Calu3 (cell line): ENCODE measurements at regions of chr6 and their contacts with region 1.

Region 1: DNA sequence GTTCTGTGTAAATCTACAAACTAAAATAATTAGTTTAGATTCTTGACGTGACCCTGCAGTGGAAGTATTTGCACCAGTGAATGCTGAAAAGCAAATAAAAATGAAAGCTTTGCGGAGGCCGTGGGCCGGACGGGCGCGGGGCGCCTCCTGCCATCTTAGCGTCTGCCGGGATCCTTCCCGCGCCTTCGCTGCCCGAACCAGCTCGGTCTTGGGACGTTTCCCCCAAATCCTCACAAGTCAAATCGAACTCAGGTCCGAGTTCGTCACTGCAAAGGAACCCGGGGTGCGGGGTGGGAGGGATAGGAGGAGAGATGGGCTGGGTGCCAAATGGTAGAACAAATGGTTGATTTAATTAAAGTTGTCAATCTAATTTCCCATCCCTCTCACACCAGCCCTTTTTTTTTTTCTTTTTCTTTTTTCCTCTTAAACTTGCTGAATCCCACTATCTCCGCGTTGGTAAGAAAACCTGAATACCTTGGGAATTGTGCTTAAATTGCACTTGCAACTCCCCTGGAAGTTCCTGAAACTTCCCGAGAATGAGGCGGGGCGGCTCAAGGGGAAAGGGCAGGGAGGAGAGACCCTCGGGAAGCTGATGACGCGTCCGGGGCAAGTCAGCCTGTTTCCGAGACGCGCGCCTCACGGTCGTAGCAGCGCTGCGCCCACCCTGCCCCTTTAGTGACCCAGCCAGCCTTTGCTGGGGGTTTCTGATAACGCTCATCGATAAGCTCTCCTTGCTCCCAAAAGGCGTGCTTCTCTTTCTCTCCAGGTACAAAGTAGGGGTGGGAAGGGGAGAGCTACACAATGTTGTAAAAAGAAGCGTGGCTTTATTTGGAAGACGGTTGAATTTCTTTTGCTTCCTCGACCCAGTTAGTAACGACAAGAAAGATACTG is 1.8 kb downstream of the GJA1 start:
- DNase-seq: peak; percentile 48
- H3K4me3 Mint-ChIP-seq: peak overlapping the region; percentile 94
- H3K27ac Mint-ChIP-seq: peak overlapping the region; percentile 98
- H3K4me1 Mint-ChIP-seq: peaks cover 22% of the 10 kb centered on the region
- H3K27me3 Mint-ChIP-seq: no peaks in the 10 kb centered on the region
- CTCF ChIP-seq: no peak

Region 2: DNA sequence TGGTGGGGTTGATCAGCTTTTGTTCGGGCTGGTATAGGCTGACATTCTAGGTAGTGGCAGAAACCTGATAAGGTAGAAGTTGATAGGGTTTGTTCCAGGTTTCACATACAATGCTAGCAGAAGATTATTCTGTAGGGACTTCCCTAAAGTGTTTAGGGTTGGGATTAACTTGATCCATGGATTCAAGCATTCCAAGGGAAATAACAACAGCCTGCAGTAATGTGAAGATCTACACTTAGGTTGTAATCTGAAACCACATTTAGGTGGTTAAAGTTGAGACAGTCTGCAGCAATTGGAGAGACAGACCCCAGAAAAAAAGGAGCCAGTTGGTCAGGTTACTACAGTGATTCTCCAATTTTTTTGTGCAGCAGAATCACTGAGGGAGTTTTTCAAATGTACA is 54.4 kb after region 1 on chr6:
- CTCF ChIA-PET with region 1: interaction called, 3 read pairs
- intact Hi-C with region 1: loop called (anchors 5 kb)
- DNase-seq: no peak
- H3K4me3 Mint-ChIP-seq: peak overlapping the region; percentile 57
- H3K27ac Mint-ChIP-seq: peak overlapping the region; percentile 87
- H3K4me1 Mint-ChIP-seq: peaks cover 58% of the 10 kb centered on the region
- H3K27me3 Mint-ChIP-seq: no peaks in the 10 kb centered on the region
- CTCF ChIP-seq: no peak

Region 3: DNA sequence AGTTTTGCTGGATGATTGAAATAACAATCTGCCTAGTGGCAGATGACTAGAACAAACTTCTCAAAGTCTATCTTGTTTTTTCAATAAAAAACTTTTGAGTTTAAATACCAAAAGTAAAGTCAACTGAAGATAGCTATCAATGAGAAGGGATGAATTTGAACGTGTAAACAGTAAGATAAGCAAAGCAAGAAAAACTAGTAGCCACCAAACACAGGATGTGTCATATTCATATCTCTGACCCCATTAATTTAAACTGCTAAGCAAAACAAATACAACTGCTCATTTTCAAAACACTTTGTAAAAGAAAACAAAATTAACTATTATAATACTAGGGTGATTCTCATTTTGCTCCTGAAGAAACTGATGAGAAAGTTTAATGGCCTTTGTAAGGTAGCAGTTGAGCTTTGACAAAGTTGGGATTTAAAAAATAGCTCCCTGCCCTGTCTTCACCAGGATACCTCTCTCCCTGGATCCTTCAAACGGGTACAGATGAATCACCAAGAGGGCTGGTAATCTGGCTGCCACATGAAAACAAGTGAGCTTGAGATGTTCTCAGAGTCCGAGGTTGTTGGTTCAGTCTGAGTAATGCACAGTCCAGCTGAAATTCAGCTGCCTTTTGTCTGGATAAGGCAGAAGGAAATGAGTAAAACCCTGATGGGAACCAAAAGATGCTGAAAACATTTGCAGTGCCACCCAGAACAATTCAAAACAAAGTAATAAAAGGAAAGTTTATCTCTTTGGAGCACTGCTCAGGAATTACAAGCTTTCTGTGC is 84.9 kb after region 1 on chr6:
- CTCF ChIA-PET with region 1: no interaction called
- intact Hi-C with region 1: loop called (anchors 5 kb)
- DNase-seq: no peak
- H3K4me3 Mint-ChIP-seq: no peak overlapping the region
- H3K27ac Mint-ChIP-seq: no peak overlapping the region
- H3K4me1 Mint-ChIP-seq: peaks cover 14% of the 10 kb centered on the region
- H3K27me3 Mint-ChIP-seq: no peaks in the 10 kb centered on the region
- CTCF ChIP-seq: no peak

Region 4: DNA sequence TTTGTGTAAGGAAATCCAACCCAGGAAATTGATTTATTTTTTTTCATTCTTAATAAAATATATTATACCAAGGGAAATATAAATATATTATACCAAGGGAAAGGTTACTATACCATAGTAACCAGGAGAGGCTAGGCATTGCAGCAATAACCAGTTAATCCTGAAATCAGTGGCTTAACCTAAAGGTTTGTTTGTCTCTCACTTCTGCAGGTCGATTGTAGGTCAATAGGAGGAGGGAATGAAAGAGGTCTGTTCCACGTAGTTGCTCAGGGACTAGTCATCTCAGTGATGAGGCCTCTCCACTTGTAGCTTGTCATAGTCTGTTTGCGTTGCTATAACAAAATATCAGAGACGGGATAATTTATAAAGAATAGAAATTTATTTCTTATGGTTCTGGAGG is 166.3 kb after region 1 on chr6:
- CTCF ChIA-PET with region 1: no interaction called
- intact Hi-C with region 1: loop called (anchors 5 kb)
- DNase-seq: no peak
- H3K4me3 Mint-ChIP-seq: no peak overlapping the region
- H3K27ac Mint-ChIP-seq: no peak overlapping the region
- H3K4me1 Mint-ChIP-seq: no peaks in the 10 kb centered on the region
- H3K27me3 Mint-ChIP-seq: no peaks in the 10 kb centered on the region
- CTCF ChIP-seq: no peak

Region 5: DNA sequence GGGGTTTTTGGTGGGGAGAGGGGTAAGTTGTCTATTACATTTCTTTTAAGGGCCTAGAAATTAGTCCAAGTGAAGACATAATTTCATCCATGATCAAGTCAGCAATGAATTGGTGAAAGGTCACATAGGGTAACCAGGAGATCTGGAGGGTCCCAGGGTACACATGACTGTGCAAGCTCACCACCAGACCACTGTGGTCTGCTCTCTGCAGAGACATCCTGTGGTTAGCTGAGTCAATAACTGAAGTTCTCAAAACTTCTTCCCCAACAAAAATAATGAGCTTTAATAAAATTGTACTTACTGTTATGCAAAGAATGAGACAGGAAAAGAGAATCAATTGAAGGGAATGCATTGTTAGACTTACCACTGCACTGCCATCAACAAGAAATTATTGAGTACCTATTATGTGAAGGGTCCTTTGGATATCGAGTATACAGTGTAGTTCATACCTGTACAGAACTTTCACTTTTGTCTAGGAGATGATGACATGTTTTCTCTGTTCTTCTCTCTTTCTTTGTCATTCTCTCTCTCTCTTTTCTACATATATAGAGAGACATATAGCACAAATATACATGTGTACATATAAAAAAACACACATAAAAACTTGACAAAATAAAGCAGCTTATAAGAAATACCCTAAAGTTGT is 208.0 kb after region 1 on chr6:
- CTCF ChIA-PET with region 1: no interaction called
- intact Hi-C with region 1: no loop called
- DNase-seq: no peak
- H3K4me3 Mint-ChIP-seq: no peak overlapping the region
- H3K27ac Mint-ChIP-seq: no peak overlapping the region
- H3K4me1 Mint-ChIP-seq: no peaks in the 10 kb centered on the region
- H3K27me3 Mint-ChIP-seq: no peaks in the 10 kb centered on the region
- CTCF ChIP-seq: no peak

Region 6: GRCh38 chr6:121800047-121800446 is 362.8 kb after region 1 on chr6:
- CTCF ChIA-PET with region 1: interaction called, 11 read pairs
- intact Hi-C with region 1: no loop called
- DNase-seq: no peak
- H3K4me3 Mint-ChIP-seq: no peak overlapping the region
- H3K27ac Mint-ChIP-seq: no peak overlapping the region
- H3K4me1 Mint-ChIP-seq: peaks cover 8% of the 10 kb centered on the region
- H3K27me3 Mint-ChIP-seq: no peaks in the 10 kb centered on the region
- CTCF ChIP-seq: no peak